CD4-positive, alpha-beta memory T cell (primary cell): ENCODE measurements at regions of chr9 and their contacts with region 1.

Region 1: DNA sequence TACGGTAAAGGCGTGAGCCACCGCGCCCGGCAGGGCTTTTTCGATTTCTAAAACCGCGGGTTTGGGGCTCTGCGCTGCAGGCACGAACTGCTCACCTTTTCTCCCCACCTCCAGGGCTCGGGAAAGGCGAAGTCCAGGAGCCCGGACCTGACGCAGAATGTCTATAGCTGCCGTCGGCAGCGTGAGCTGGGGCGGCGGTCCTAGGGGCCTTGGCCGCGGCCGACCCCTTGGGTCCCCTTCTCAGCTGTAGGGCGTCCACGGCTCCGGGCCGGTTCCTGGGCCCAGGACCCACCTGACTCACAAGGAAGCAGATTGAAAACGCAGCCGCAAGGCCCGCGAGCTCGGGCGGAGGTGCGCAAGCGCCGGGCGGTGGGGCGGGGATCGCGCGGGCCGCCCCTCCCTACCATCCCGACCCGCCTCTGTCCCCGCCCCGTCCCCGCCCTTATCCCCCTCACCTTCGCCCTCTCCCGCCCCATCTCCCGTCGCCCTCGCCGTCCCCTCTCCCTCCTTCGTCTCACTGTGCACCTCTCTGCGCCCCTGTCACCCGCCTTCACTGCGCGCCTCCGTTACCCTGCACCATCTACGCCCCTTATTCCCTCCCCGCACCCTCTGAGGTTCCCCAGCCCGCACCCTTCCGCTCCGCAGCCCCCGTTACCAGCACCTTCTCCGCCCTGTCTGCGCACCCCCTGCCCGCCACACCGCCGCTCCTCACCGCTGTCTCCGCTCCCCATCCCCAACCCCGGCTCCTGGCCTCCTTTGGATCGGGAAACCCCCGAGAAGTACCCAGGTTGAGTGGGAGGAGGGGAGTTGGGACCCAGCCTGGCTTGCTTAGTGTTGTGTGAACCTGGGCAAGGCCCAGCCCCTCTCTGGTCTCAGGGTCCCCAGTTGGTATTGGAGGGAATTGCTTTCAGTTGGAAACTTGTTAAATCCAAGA is at the start of gene HDHD3:
- DNase-seq: peak; percentile 78 to 81 (median 80)
- H3K4me3 ChIP-seq: peak within 1 kb of the TSS; percentile 57 to 92
- H3K4me3 Mint-ChIP-seq: peak within 1 kb of the TSS; percentile 88 to 93 (median 90)
- H3K27ac ChIP-seq: peak within 1 kb of the TSS; percentile 66
- H3K27ac Mint-ChIP-seq: peak within 1 kb of the TSS; percentile 74 to 96 (median 89)
- H3K4me1 ChIP-seq: peaks cover 13% of the 10 kb centered on the region
- H3K4me1 Mint-ChIP-seq: peaks cover 12 to 23% (median 17%) of the 10 kb centered on the region in 4 donors
- H3K27me3 ChIP-seq: no peaks in the 10 kb centered on the region
- H3K27me3 Mint-ChIP-seq: no peaks in the 10 kb centered on the region
- total RNA-seq, gene HDHD3: 29.9 to 32.8 TPM

Region 2: GRCh38 chr9:112556497-112557085 is 820.3 kb before region 1 on chr9:
- CTCF ChIA-PET with region 1: no interaction called
- POLR2A ChIA-PET with region 1: no interaction called
- intact Hi-C with region 1: no loop called
- DNase-seq: no peak
- H3K4me3 ChIP-seq: no peak overlapping the region
- H3K4me3 Mint-ChIP-seq: no peak overlapping the region
- H3K27ac ChIP-seq: no peak overlapping the region
- H3K27ac Mint-ChIP-seq: peak overlapping the region in 1 of 7 donors; percentile 53
- H3K4me1 ChIP-seq: no peaks in the 10 kb centered on the region
- H3K4me1 Mint-ChIP-seq: no peaks in the 10 kb centered on the region
- H3K27me3 ChIP-seq: no peaks in the 10 kb centered on the region
- H3K27me3 Mint-ChIP-seq: no peaks in the 10 kb centered on the region

Region 3: DNA sequence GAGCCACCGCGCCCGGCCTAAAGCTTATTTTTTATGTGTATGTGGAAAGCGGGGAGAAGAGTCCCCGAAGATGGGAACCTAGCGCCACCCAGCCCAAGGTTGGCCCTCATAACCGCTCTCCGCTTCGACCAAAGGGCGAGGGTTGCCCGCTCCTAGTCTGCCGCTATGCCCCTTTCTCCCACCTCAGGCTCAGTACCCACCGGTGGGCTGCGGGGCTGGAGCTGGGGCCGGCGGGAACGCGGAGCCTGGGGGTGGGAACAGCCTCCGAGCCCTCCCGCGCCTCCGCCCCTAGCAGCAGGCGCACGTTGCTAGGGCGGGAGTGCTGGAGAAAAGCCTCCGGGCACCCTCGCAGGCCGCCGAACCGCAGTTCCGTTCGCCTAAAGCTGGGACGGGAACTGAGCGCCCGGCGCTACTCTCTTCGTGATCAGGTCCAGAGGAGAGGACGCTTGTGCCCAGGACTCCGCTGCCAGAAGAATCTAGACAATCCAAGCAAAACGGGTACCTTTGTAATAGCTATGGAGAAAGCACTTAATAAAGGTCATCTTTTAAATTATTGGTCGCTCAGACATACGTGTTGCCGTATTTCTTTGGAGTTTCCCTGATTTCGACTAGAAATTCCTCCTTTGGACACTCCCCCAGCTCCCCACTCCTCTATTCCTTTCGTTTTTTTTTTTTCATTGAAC is 36.7 kb before region 1 on chr9 and contains the start of gene WDR31:
- CTCF ChIA-PET with region 1: interaction called, 3 read pairs
- POLR2A ChIA-PET with region 1: interaction called, 11 read pairs
- intact Hi-C with region 1: loop called (anchors 1 kb)
- DNase-seq: peak; percentile 61 to 78 (median 75)
- H3K4me3 ChIP-seq: peak within 1 kb of the TSS; percentile 8 to 79
- H3K4me3 Mint-ChIP-seq: peak within 1 kb of the TSS; percentile 82 to 92 (median 87)
- H3K27ac ChIP-seq: peak within 1 kb of the TSS; percentile 28
- H3K27ac Mint-ChIP-seq: peak within 1 kb of the TSS in 6 of 7 donors; percentile 51 to 73 (median 56)
- H3K4me1 ChIP-seq: peaks cover 10% of the 10 kb centered on the region
- H3K4me1 Mint-ChIP-seq: peaks cover 7 to 23% (median 15%) of the 10 kb centered on the region in 4 donors
- H3K27me3 ChIP-seq: no peaks in the 10 kb centered on the region
- H3K27me3 Mint-ChIP-seq: peaks cover 1 to 4% of the 10 kb centered on the region in 2 donors
- total RNA-seq, gene WDR31: 0.33 to 0.67 TPM

Region 4: DNA sequence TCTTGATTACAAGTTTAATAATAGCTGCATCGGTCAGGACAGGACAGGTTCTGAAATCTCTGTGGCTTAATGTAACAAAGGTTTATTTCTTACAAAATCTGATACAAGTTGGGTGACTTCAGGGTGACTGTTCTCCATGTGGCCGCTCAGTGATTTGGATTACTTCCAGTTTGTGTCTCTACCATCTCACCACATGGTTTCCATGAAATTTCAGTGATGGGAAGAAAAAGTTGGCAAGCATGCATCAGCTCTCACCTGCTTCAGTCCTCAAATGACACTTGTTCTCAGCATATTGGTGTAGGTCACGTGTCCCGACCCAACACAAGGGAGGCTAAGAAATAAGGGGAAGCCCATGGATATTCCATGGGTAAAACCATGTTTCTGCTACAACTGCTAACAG is 1226.3 kb after region 1 on chr9:
- CTCF ChIA-PET with region 1: no interaction called
- POLR2A ChIA-PET with region 1: no interaction called
- intact Hi-C with region 1: no loop called
- DNase-seq: no peak
- H3K4me3 ChIP-seq: no peak overlapping the region
- H3K4me3 Mint-ChIP-seq: no peak overlapping the region
- H3K27ac ChIP-seq: no peak overlapping the region
- H3K27ac Mint-ChIP-seq: peak overlapping the region in 1 of 7 donors; percentile 4
- H3K4me1 ChIP-seq: no peaks in the 10 kb centered on the region
- H3K4me1 Mint-ChIP-seq: peaks cover 0 to 3% (median 1%) of the 10 kb centered on the region in 4 donors
- H3K27me3 ChIP-seq: no peaks in the 10 kb centered on the region
- H3K27me3 Mint-ChIP-seq: no peaks in the 10 kb centered on the region